ENCODE measurements at regions of chr15 and their contacts with region 1.

Region 1: GRCh38 chr15:57213862-57214261 is 162.4 kb upstream of the CGNL1 start:
- DNase-seq: peak; percentile 55
- ATAC-seq: peak; percentile 27
- H3K4me3 ChIP-seq: no peak overlapping the region
- H3K27ac ChIP-seq: no peak overlapping the region
- H3K4me1 ChIP-seq: peaks cover 32% of the 10 kb centered on the region
- H3K27me3 ChIP-seq: no peaks in the 10 kb centered on the region
- CTCF ChIP-seq: peak; percentile 66

Region 2: GRCh38 chr15:56496635-56497034 is 717.2 kb before region 1 on chr15:
- CTCF ChIA-PET with region 1: interaction called, 3 read pairs
- POLR2A ChIA-PET with region 1: no interaction called
- intact Hi-C with region 1: loop called (anchors 2 kb)
- DNase-seq: peak; percentile 73
- ATAC-seq: peak; percentile 82
- H3K4me3 ChIP-seq: peak overlapping the region; percentile 40; the same call in 1 of the 2 replicates
- H3K27ac ChIP-seq: no peak overlapping the region
- H3K4me1 ChIP-seq: peaks cover 23% of the 10 kb centered on the region; the same call in 1 of the 2 replicates
- H3K27me3 ChIP-seq: no peaks in the 10 kb centered on the region
- CTCF ChIP-seq: peak; percentile 75

Region 3: GRCh38 chr15:57017024-57017423 is 196.8 kb before region 1 on chr15:
- CTCF ChIA-PET with region 1: no interaction called
- POLR2A ChIA-PET with region 1: no interaction called
- intact Hi-C with region 1: loop called (anchors 10 kb)
- DNase-seq: peak; percentile 19
- ATAC-seq: peak; percentile 42
- H3K4me3 ChIP-seq: no peak overlapping the region
- H3K27ac ChIP-seq: no peak overlapping the region
- H3K4me1 ChIP-seq: peaks cover 23% of the 10 kb centered on the region
- H3K27me3 ChIP-seq: no peaks in the 10 kb centered on the region
- CTCF ChIP-seq: peak; percentile 39; the same call in 1 of the 2 replicates

Region 4: DNA sequence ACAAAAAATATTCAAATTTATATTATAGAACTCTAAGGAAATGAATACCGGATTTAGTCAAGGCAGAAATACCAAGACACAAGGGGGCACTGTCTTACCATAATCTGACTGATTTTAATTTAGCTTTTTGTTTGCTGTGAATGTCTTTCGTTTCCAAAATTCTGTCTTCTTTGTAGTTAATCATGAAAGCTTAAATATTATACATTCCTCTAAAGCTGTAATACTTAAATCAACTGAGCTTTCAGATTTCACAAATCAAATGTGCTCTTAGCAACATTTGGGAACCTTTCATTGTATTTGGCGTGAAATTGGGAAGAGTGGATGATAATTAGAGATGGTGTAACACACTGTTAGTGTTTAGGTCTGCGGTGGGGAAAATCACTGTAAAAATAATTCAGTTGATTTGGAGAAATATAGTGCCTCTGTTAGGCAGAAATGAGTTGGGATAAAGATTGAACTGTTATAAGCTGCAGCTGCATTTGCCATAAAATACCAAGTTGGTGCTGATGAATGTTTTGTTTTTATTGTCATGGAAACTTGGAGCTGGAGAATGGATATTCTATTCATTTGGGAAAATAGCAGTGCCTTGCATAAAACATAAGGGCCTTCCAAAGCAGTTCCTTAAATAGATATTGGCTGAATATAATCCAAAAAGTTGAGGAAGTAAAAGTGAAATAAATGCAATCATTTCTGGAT is 67.2 kb before region 1 on chr15:
- CTCF ChIA-PET with region 1: interaction called, 7 read pairs
- POLR2A ChIA-PET with region 1: no interaction called
- intact Hi-C with region 1: loop called (anchors 2 kb)
- DNase-seq: peak; percentile 63
- ATAC-seq: peak; percentile 46; the same call in 1 of the 2 replicates
- H3K4me3 ChIP-seq: 0 out of 2 replicates have a peak overlapping the region, but pooled peaks have one; percentile 16
- H3K27ac ChIP-seq: no peak overlapping the region
- H3K4me1 ChIP-seq: no peaks in the 10 kb centered on the region
- H3K27me3 ChIP-seq: no peaks in the 10 kb centered on the region
- CTCF ChIP-seq: peak; percentile 72

Region 5: DNA sequence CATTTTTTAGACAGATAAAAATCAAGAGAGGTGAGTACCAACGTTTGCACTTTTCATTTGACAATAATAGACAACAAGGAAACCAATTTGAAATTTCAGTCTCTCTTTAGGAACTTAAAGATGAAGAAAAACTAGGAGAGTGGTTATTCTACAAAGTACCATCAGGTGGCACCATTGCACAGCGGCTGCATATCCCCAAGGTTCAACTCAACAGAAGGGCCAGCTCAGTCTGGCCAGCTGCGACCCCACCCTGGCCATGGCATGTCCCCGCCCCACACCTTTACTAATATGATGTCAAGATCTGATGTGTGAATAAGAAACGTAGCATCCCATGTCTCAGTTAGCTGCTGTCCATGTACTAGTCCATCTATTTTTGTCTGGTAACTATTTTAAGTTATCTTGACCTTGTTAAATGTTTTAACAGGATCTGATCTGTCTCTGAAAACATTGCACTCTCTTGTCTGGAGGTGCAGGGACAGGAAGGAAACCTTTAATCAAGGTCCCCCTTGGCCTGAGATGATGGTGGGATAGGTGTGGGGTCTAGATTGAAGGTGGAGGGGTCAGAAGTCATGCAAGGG is 126.9 kb after region 1 on chr15:
- CTCF ChIA-PET with region 1: no interaction called
- POLR2A ChIA-PET with region 1: no interaction called
- intact Hi-C with region 1: no loop called
- DNase-seq: peak; percentile 66
- ATAC-seq: peak; percentile 66
- H3K4me3 ChIP-seq: no peak overlapping the region
- H3K27ac ChIP-seq: no peak overlapping the region
- H3K4me1 ChIP-seq: no peaks in the 10 kb centered on the region
- H3K27me3 ChIP-seq: no peaks in the 10 kb centered on the region
- CTCF ChIP-seq: peak; percentile 87

Region 6: DNA sequence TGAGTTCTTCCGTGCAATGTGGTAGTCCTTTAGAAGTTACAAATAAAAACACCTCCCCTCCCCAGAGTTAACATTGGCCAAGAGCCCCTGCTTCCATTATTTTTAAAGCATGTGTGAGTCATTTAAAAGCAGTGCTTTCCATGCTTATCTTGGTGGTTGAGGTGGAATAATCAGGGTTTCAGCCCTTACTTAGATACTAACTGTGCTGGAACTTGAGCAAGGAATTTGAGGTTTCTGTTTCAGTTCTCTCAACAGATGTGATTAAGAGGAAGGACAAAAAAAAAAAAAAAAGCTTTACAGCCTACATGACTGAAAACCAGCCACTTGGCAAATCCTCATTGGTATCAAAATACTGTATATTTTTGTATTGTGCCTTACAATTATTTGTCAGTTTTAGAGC is 226.9 kb after region 1 on chr15:
- CTCF ChIA-PET with region 1: no interaction called
- POLR2A ChIA-PET with region 1: no interaction called
- intact Hi-C with region 1: no loop called
- DNase-seq: no peak
- ATAC-seq: no peak
- H3K4me3 ChIP-seq: no peak overlapping the region
- H3K27ac ChIP-seq: no peak overlapping the region
- H3K4me1 ChIP-seq: no peaks in the 10 kb centered on the region
- H3K27me3 ChIP-seq: no peaks in the 10 kb centered on the region
- CTCF ChIP-seq: no peak